Posterior vena cava (tissue), 2 donors: ENCODE measurements at regions of chr16 and their contacts with region 1.

Region 1: DNA sequence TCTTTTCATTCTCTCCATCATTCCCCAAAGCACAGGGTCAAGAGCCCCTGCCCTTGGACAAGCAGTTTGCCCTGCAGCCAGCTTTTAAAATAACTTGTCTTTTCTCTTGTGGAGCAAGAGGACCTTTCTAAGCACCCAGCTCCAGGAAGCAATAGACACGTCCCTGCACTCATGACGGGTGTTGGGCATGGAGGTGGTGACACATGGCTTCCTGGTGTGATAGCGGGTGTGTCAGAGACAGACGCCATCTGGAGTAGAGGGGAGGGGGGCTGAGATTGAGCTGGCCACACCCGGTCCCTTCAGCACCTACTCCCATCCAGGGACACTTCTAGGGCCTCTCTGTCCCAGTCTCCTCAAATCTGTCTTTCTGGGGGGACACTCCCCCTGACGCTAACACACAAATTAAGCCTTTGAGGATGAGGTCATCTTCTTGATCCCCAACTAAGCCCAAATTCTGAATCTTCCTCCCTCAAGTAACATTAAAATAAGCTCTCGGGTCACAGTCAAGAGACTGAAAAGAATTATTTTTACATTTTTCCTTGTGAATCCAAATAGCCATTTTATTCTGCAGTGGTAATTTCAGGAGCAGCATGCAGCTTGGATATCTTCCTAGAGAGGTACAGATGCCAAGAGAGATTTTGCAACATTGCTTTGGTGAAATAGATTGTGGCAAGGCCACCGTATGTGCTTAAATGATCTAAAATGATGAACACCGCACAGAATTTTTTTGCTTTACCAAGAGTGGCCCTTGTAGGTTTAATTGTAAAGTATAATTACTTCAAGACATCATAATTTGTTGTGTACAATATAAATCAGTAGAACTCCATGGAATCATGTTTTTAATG is 216.6 kb upstream of the IRX3 start:
- DNase-seq: no peak

Region 2: DNA sequence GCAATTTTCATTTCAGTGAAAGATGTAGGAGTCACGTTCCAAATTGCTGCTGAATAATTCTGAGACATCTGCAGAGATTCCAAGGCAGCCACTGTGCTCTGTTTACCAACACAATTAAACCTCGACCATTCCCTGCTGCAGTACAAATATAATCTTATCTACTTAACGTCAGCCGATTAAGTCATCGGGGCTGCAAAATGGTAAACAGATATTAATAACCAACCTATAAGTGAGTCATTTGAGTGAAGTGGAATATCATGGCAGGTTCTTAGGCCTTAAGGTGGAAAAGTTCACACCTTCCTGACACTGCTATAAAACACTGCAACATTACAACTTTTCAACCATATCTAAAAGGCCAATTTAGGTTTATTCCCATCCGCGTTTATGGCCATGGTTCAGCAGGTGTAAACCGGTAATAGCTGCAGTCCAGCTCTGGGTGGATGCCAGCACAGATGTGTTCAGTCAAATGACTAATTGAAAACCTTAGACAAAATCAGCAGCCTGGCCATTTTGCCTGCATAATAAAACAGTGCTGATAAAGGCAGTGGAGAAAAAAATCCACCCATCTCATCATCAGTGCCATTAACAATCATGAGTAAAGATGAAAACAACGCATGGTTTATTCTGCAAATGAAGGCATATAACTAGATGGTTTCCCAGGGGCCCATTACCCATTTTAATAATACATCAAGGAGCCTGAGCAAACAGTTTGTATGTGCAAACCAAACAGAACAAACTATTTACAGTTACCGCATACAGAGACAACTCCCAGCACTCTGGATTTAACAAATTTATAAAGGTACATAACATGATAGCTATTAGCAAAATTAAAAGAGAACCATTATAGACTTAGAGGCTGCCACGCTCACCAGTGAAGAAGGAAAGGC is 13.8 kb before region 1 on chr16:
- intact Hi-C with region 1: no loop called
- DNase-seq: no peak

Region 3: DNA sequence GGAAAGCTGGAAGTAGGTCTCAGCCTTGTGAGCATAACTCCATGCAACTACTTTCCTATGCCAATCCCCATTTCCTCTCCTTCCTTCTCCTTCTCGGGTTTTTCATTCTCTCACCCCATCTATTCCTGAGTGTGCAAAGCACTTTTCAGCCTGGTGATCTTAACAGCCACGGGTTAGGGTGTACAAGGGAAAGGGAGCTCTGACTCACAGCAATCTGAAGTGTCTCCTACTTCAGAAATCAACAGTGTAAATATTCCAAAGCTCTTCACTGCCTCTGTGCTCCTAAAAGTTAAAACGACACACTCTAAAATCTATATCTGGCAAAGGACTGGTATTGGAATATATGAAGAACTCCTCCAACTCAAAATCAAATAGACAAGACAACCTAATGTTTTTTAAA is 51.3 kb after region 1 on chr16:
- intact Hi-C with region 1: no loop called
- DNase-seq: no peak

Region 4: GRCh38 chr16:54602666-54603065 is 99.4 kb after region 1 on chr16:
- intact Hi-C with region 1: no loop called
- DNase-seq: no peak

Region 5: DNA sequence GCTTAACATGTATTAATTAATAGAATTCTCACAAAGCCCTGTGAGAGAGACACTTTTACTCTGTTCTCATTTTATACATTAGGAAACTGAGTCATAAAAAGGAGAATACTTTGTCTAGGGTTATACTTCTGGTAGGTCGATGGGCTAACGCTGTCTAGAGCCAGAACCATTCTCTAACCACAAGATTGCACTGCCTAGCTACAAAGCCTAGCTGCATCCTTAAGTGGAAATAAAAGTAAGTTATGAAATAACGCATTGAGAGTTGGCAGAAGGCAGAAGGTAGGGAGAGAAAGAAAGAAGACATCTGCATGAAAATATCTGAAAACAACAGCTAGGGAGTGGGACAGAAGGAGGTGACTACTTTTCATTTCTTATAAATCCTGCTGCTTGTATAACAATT is 854.0 kb after region 1 on chr16:
- intact Hi-C with region 1: loop called in 1 of 2 experiments (anchors 5 kb)
- DNase-seq: no peak